Calu3 (cell line): ENCODE measurements at regions of chr12 and their contacts with region 1.

Region 1: DNA sequence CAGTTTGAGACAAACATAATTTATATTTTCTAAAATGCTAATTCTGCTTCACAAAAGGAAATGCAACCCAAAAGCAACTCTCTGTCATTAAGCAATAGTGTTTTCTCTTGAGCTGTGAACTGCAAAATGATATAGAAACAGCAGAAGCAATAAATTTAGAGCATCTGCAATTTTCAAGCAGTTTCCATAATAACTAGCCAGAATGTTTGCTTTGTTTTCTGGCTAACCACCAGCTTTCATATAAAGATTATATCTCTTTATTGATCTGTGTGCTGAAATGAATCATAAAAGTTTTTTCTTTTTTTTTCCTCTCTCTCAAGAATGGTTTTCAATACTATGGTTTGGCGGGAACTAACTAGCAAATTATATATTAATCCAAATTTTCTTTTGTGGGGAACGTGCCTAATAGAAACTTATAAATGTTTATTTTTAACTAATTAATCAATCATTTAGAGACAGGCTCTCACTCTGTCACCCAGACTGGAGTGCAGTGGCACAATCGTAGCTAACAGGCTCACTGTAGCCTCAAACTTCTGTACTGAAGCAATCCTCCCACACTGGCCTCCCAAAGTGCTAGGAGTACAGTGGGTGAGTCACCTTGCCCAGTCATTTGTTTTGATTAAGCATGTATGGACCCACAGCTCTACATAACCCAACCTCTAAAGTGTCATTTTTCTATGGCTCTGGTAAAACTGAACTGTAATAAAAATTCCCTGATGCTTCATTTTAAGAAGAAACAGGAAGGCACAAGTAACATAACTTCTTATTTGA is 830.1 kb upstream of the MGAT4C start:
- DNase-seq: peak; percentile 61
- H3K4me3 Mint-ChIP-seq: no peak overlapping the region
- H3K27ac Mint-ChIP-seq: no peak overlapping the region
- H3K4me1 Mint-ChIP-seq: peaks cover 8% of the 10 kb centered on the region
- H3K27me3 Mint-ChIP-seq: no peaks in the 10 kb centered on the region
- CTCF ChIP-seq: no peak

Region 2: GRCh38 chr12:86959766-86960458 is 126.4 kb before region 1 on chr12:
- CTCF ChIA-PET with region 1: no interaction called
- intact Hi-C with region 1: no loop called
- DNase-seq: no peak
- H3K4me3 Mint-ChIP-seq: no peak overlapping the region
- H3K27ac Mint-ChIP-seq: no peak overlapping the region
- H3K4me1 Mint-ChIP-seq: no peaks in the 10 kb centered on the region
- H3K27me3 Mint-ChIP-seq: no peaks in the 10 kb centered on the region
- CTCF ChIP-seq: no peak

Region 3: DNA sequence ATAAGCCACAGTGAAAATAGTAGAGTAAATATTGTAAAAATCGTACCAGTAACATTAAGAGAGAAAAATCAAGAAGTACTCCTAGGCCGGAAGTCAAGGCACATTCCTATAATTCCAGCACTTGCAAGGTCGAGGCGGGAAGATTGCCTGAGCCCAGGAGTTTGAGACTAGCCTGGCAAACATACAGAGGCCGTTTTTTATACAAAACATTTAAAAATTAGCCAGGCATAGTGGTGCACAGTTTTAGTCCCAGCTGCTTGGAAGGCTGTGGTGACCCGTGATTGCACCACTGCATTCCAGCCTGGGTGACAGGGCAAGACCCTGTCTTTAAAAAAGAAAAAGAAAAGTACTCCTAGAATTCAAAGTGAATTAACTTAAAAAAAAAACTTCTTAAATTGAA is 601.1 kb after region 1 on chr12:
- CTCF ChIA-PET with region 1: no interaction called
- intact Hi-C with region 1: loop called (anchors 10 kb)
- DNase-seq: peak; percentile 50
- H3K4me3 Mint-ChIP-seq: no peak overlapping the region
- H3K27ac Mint-ChIP-seq: peak overlapping the region; percentile 66
- H3K4me1 Mint-ChIP-seq: peaks cover 19% of the 10 kb centered on the region
- H3K27me3 Mint-ChIP-seq: no peaks in the 10 kb centered on the region
- CTCF ChIP-seq: no peak